Panc1 (cell line): ENCODE measurements at regions of chr13 and their contacts with region 1.

Region 1: GRCh38 chr13:100235311-100235901 is 146.5 kb downstream of the PCCA start:
- DNase-seq: peak; percentile 32
- ATAC-seq: no peak; the same call in 1 of the 2 replicates
- H3K4me3 ChIP-seq: no peak overlapping the region
- H3K27ac ChIP-seq: peak overlapping the region; percentile 57
- H3K4me1 ChIP-seq: peaks cover 23% of the 10 kb centered on the region
- H3K27me3 ChIP-seq: no peaks in the 10 kb centered on the region
- CTCF ChIP-seq: peak; percentile 51; the same call in 1 of the 2 replicates

Region 2: DNA sequence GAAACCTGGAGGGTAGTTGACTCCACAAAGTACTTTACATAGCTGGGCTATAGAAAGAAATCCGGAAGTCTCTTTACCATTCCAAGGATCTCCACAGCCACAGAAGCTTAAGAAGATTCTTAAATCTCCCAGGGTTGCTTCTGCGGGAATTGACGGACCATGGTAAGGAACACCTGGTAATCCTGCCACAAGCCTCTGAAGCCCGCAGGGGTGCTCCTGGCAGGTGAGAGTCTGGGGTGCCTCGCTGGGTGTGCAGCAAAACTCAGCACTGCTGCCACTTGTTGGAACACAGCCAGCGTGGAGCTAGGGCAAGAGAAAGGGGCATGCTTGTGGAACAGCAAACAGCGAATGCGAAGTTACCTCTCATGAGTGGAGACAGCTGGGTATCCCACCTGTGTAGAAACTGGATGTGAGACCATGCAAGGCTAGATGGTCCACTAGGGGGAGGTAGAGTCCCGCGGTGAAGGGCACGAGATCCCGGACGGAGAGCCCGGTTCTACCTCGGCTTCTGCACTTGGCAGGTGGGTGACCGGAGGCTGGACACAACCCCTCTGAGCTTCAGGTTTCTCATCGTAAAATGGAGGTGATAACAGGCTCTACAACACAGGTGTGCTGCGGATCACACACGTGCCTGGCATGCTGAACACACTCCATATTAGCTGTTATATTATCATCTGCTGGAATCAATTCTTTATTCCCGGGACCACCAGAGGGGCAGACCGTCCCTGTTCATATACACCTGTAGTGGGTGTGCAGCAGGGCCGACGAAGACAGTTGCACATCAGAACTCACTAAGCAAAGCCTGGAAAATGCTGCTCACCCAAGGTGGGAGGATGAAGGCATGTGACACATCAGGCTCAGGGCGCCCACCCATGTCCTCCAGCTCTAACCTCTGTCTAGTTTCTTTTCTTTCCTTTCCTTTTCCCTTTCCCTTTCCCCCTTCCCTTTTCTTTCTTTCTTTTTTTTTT is 1058.8 kb before region 1 on chr13:
- CTCF ChIA-PET with region 1: interaction called, 12 read pairs
- POLR2A ChIA-PET with region 1: no interaction called
- in situ Hi-C with region 1: no loop called
- intact Hi-C with region 1: no loop called
- DNase-seq: peak; percentile 46
- ATAC-seq: peak; percentile 96
- H3K4me3 ChIP-seq: no peak overlapping the region
- H3K27ac ChIP-seq: no peak overlapping the region
- H3K4me1 ChIP-seq: no peaks in the 10 kb centered on the region
- H3K27me3 ChIP-seq: no peaks in the 10 kb centered on the region; the same call in 1 of the 2 replicates
- CTCF ChIP-seq: peak; percentile 80

Region 3: DNA sequence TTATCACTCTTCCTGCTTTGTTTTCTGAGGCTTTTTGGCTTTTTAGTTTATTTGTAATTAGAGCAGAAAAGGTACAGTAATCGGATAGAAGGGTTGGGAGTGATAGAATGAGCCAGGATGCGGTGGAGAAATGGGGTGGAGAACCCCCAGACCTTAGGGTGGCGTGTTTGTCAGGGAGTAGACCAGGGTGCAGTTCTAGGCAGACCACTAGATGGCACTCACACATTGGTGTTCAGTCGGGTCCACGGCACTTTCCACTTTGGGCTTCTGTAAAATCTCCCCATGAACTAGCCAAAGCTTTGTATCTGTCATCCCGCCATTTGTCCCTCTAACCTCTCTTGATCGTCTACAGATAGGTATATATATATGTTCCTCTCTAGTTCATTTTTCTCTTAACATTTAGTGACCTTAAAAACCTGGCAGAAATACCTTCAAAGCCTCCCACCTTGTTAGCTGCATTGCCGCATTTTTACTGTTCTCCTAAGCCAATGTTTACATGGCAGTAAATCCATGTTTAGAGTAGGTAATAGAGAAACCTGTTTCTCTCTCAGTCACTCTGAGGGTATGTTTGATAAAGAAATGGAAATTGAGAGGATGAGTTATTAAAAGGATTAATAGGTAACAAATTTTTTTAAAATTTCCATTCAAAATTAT is 579.2 kb before region 1 on chr13:
- CTCF ChIA-PET with region 1: no interaction called
- POLR2A ChIA-PET with region 1: no interaction called
- in situ Hi-C with region 1: no loop called
- intact Hi-C with region 1: loop called (anchors 10 kb)
- DNase-seq: peak; percentile 61
- ATAC-seq: peak; percentile 87
- H3K4me3 ChIP-seq: no peak overlapping the region
- H3K27ac ChIP-seq: peak overlapping the region; percentile 44; the same call in 1 of the 2 replicates
- H3K4me1 ChIP-seq: peaks cover 12% of the 10 kb centered on the region
- H3K27me3 ChIP-seq: no peaks in the 10 kb centered on the region
- CTCF ChIP-seq: peak; percentile 78

Region 4: DNA sequence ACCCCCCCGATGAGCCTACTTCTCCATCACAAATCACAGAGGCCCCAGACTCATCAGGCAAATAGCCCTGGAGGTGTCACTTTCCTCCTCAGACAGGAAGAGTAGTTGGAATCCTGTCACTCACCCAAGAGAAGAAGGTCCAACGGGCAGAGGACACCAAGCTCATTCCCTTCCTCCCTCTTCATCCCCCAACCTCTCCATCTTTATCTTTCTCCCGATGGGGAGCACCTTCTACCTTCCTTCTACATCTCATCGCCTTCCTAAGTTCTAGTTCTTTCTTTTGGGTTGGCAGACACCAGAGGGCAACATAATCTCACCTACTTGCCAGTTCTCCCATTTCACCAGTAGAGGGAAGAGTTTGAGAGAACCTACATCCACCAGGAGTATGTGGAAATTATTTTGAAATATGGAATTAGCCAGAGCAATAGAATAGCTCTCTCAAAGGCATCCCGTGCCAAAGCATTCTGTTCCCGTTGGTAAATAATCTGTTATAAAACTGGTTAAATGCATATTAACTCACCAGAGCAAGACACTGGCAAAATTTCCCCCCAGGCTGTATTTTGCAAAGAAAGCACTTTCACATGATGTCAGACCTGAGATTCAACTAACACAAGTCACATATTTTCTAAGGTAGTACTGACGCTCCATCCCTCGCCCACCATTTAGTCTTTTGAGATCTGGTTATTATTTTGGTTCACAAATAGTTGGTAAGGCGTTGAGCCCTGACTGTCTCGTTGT is 318.9 kb before region 1 on chr13:
- CTCF ChIA-PET with region 1: interaction called, 3 read pairs
- POLR2A ChIA-PET with region 1: no interaction called
- in situ Hi-C with region 1: no loop called
- intact Hi-C with region 1: loop called (anchors 10 kb)
- DNase-seq: peak; percentile 61
- ATAC-seq: peak; percentile 96
- H3K4me3 ChIP-seq: no peak overlapping the region
- H3K27ac ChIP-seq: peak overlapping the region; percentile 39; the same call in 1 of the 2 replicates
- H3K4me1 ChIP-seq: no peaks in the 10 kb centered on the region; the same call in none of the 2 replicates
- H3K27me3 ChIP-seq: no peaks in the 10 kb centered on the region
- CTCF ChIP-seq: peak; percentile 78

Region 5: GRCh38 chr13:99980201-99980823 is 255.1 kb before region 1 on chr13:
- CTCF ChIA-PET with region 1: interaction called, 3 read pairs
- POLR2A ChIA-PET with region 1: interaction called, 4 read pairs
- in situ Hi-C with region 1: no loop called
- intact Hi-C with region 1: loop called (anchors 5 kb)
- DNase-seq: no peak
- ATAC-seq: peak; percentile 71
- H3K4me3 ChIP-seq: peak overlapping the region; percentile 75 to 84
- H3K27ac ChIP-seq: peak overlapping the region; percentile 79
- H3K4me1 ChIP-seq: peaks cover 21% of the 10 kb centered on the region
- H3K27me3 ChIP-seq: no peaks in the 10 kb centered on the region
- CTCF ChIP-seq: peak; percentile 21; the same call in 1 of the 2 replicates